ENCODE measurements at regions of chr16 and their contacts with region 1.

Region 1: GRCh38 chr16:3188925-3189825 is 1.2 kb downstream of the OR1F1 start:
- DNase-seq: peak; percentile 79
- H3K4me3 Mint-ChIP-seq: peak overlapping the region; percentile 69
- H3K27ac Mint-ChIP-seq: peak overlapping the region; percentile 70
- H3K4me1 Mint-ChIP-seq: peaks cover 46% of the 10 kb centered on the region
- H3K27me3 Mint-ChIP-seq: peaks cover 67% of the 10 kb centered on the region

Region 2: GRCh38 chr16:3173892-3174617 is 15.1 kb before region 1 on chr16:
- CTCF ChIA-PET with region 1: interaction called, 4 read pairs
- POLR2A ChIA-PET with region 1: no interaction called
- intact Hi-C with region 1: loop called (anchors 2 kb)
- DNase-seq: peak; percentile 57
- H3K4me3 Mint-ChIP-seq: peak overlapping the region; percentile 71
- H3K27ac Mint-ChIP-seq: peak overlapping the region; percentile 19
- H3K4me1 Mint-ChIP-seq: peaks cover 34% of the 10 kb centered on the region
- H3K27me3 Mint-ChIP-seq: peaks cover 51% of the 10 kb centered on the region

Region 3: DNA sequence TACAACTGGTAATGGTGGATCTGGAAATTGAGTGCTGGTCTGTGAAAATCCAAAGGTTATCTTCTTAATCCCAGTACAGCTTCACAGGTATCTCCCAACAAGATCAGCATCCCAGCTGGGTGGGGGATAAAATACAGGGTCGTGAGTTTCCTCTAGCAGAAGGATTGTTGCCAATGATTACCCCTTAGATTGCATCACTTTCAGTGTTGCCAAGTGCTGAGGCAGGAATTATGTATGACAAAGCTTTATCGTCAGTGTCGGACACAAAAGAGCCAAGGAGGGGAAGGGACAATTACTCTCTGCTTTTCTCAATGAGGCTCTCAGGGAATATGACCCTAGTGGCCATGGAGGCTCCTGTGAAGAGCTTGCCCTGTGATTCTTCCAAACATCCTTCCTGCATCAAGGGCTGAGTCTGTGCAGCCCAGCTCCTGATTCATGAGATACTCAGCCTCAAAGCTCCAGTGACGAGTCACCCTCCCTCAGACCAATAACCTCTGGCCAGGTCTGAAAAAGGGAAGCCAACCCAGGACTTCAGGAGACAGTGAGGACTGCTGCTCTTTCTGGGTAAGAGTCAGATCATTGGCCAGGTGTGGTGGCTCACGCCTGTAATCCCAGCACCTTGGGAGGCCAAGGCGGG is 13.8 kb after region 1 on chr16:
- CTCF ChIA-PET with region 1: no interaction called
- POLR2A ChIA-PET with region 1: no interaction called
- intact Hi-C with region 1: no loop called
- DNase-seq: no peak
- H3K4me3 Mint-ChIP-seq: no peak overlapping the region
- H3K27ac Mint-ChIP-seq: no peak overlapping the region
- H3K4me1 Mint-ChIP-seq: peaks cover 3% of the 10 kb centered on the region
- H3K27me3 Mint-ChIP-seq: peaks cover 2% of the 10 kb centered on the region

Region 4: GRCh38 chr16:3328643-3329042 is 139.5 kb after region 1 on chr16:
- CTCF ChIA-PET with region 1: no interaction called
- POLR2A ChIA-PET with region 1: no interaction called
- intact Hi-C with region 1: no loop called
- DNase-seq: no peak
- H3K4me3 Mint-ChIP-seq: no peak overlapping the region
- H3K27ac Mint-ChIP-seq: no peak overlapping the region
- H3K4me1 Mint-ChIP-seq: no peaks in the 10 kb centered on the region
- H3K27me3 Mint-ChIP-seq: no peaks in the 10 kb centered on the region